A549 (cell line): ENCODE measurements at regions of chr17 and their contacts with region 1.

Region 1: DNA sequence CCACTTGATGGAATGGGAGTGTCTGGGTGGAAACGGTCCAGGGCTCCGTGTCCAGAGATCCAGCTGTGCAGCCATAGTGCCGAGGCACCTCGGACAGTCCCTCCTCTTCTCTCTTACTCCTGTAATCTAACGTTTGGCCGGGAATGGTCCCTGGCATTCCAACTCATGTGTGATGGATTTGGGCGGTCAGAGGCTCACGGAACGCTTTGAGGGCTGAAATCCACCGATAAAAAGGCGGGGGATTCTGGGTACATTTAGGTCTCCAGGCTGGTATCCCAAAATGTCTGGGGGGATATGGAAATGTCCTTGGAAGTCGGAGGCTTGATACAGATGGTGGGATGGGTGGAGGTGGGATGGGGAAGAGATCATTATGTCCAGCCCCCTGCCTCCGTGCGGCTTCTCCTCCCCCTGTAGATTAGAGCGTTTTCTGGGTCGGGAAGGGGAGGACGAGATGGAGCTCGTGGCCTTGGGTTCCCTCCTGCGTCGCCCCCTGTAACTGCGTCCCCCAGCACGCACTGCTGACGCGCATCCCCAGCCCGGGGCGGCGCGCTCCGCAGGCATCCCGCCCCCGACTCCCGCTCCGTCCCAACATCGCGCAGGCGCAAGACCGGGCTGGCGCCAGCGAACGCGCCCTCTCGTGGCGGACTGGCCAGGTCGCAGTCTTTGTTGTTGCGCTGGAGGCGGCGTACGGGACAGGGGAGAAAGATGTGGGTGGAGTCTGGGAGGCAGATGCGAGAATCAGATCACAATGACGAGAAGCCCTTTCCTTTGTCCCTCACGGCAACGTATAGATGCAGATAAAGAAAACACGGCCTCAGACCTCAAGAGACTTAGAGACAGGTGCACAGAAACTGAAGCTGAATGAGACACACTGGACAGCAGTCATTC is 4.5 kb upstream of the SGCA start:
- DNase-seq: peak; percentile 92 to 100
- ATAC-seq: peak; percentile 88 to 96
- H3K4me3 ChIP-seq: peak overlapping the region; percentile 74
- H3K27ac ChIP-seq: peak overlapping the region; percentile 80 to 86
- H3K4me1 ChIP-seq: peaks cover 9% of the 10 kb centered on the region; the same call in 2 of the 3 replicates
- CTCF ChIP-seq: peak; percentile 98
- EP300 ChIP-seq: no peak
- POLR2A ChIP-seq: peak; percentile 92
- RAD21 ChIP-seq: peak; percentile 72 to 80

Region 2: DNA sequence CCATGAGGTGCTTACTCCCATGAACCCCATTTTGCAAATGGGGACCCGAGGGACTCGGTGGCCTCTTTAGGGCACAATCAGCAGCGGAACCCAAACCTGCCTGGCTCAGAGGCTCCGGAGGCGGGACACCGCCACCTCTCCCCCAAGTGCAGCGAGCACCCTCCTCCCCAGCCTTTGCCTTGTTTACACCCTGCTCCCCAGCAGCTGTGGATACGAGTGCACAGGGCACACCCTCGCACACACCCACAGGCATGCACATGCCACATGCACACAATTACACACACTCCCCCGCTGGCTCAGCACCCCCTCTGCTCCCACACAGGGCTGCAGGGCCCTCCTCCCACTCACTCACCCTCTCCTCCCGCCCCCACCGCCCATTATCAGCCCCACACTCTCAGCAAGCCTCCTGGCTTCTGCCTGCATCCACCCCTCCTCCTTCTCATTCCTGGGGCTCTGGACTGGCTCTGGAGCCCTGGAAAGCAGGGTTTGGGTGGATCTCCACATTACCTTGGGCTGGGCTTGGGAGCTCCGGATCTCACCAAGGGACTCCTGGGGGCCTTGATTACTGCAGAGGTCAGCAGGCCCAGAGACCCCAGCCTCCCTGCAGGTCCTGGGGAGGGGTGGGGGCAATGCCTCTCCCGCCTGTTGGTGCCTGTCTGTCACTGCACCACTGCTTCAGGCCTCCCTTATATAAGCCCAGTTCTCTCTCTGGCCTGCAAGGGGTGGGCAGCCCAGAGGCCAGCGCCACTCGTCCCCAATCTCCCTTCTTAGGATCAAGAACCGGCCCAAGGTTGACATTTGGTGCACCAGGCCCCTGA is 59.7 kb before region 1 on chr17:
- CTCF ChIA-PET with region 1: interaction called, 1,356 read pairs
- POLR2A ChIA-PET with region 1: no interaction called
- DNase-seq: no peak
- ATAC-seq: peak; percentile 27 to 63
- H3K4me3 ChIP-seq: no peak overlapping the region
- H3K27ac ChIP-seq: peak overlapping the region in 1 of 2 experiments; percentile 68; a peak in 3 of 6 replicates
- H3K4me1 ChIP-seq: peaks cover 29% of the 10 kb centered on the region
- CTCF ChIP-seq: no peak
- EP300 ChIP-seq: no peak
- POLR2A ChIP-seq: no peak
- RAD21 ChIP-seq: no peak

Region 3: DNA sequence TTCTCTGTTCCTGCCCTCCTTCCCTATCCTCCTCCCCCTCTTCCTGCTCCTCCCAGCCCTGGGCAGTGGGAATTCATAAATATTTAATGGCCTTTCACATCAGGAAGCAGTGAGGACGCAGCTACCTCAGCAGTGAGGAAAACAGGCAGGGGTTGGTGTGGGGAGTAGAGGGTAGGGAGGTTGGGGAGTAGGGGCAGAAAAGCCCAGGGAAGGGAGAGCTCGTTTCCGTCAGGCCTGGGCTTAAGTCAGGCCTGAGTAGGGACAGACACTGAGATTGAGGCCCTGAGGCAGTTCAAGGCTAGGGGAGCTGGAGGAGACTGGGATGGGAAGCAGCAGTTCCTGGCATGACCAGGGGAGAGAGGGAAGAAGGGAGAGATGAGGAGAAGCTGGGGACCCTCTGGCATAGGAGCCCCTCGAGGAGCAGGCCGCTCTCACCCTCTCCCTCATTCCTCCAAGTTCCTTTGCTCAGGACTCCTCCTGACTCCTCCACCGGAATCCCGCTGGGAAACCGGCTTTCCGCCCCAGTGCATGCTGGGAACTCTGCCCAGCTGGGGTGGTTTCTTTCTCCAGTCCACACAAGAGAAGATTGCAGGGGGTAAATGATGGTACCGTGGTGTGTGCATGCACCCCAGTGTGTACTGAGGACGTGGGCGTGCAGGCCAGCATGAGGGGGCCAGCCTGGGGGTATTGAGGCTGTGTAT is 37.5 kb before region 1 on chr17:
- CTCF ChIA-PET with region 1: interaction called, 1,356 read pairs
- POLR2A ChIA-PET with region 1: no interaction called
- DNase-seq: no peak
- ATAC-seq: peak in 1 of 2 experiments; percentile 27; a peak in 3 of 6 replicates
- H3K4me3 ChIP-seq: no peak overlapping the region
- H3K27ac ChIP-seq: peak overlapping the region in 1 of 2 experiments; percentile 17; a peak in 1 of 6 replicates
- H3K4me1 ChIP-seq: peaks cover 10% of the 10 kb centered on the region; the same call in 1 of the 3 replicates
- CTCF ChIP-seq: no peak
- EP300 ChIP-seq: no peak
- POLR2A ChIP-seq: no peak
- RAD21 ChIP-seq: no peak

Region 4: DNA sequence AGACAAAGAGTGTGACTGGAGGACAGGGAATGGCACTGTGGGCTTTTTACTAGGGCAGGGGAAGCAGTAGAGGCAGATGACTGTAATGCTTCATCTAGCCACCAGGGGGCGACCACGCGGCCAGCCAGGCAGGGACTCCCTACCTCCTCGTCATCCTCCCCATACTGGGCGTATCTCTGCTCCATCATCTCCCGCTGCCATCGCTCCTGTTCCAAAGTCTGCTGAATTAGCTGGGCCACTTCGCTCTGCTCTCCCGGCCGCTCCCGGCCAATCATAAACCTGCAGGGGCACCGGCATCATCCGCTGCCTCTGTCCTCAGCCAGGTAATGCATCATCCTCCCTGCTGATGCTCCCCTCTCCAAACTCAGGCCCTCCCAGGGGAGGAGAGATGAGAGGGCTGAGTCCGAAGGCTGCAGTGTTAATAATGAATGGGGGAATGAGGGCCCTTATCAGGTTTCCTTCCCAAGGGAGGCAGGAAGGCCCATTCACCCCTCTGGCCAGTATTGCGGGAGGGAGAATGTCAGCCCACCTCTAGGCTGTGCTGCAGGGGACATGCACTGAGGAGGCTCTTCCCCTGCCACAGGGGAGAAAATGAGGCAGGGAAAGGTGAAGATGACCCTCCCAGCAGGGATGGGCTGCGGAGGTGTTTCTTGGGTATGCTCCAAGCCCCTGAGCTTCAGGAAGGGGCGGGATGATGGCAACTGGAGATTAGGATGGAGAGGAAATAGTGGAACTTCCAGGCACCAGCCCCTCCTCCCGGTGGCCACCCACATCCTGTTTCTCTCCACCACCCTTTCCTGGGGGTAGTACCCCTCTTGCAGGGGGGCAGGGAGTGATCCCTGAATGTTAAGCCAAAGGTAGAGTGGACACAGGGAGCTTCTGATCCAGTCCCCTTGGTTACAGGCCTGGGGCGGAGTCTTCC is 21.1 kb before region 1 on chr17:
- CTCF ChIA-PET with region 1: interaction called, 424 read pairs
- POLR2A ChIA-PET with region 1: no interaction called
- DNase-seq: peak; percentile 89 to 91
- ATAC-seq: peak; percentile 66 to 89
- H3K4me3 ChIP-seq: no peak overlapping the region
- H3K27ac ChIP-seq: no peak overlapping the region
- H3K4me1 ChIP-seq: peaks cover 18% of the 10 kb centered on the region
- CTCF ChIP-seq: peak; percentile 90
- EP300 ChIP-seq: no peak
- POLR2A ChIP-seq: no peak
- RAD21 ChIP-seq: peak; percentile 62 to 69; a peak in 4 of 5 replicates

Region 5: DNA sequence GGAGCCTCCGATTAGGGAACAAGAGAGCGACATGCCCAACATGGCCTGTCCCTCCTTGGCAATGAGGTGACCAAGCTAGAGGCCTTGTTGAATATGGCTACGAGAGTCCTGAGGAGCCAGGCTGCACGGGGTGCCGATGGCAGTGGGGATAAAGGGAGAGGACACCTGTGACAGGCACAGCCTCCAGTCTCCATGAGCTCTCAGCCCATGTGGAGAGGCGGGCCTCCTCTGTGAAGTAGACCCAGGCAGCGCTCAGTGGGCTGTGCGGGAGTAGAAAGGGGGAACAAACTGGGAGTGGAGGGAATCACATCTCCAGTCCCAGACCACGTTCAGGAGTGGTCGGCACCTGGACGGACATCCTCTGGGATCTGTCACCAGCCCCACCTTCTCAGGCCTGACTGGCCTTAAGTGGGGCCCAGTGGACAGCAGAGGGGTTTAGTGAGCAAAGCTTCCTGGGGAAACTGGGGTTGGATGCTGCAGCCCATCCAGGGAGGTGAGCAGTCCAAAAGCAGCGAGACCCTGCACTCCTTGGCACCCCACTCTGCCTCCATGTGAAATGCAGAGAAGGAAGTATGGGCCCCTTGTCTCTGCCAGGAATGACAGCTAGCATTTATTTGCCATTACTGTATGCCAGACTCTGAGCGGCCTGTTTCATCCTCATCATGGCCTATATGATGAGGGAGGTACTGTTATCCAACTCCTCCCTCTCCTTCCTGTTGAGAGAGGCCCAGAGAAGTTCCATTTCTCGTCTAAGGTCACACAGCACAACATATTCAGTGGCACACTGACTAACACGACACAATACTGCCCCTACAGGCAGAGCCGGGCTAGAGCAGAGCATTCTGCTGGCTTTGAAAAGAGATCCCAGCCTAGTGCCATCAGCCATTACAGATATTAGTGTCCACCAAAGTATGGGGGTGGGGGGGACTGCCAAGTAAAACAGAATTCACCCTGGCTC is 108.5 kb after region 1 on chr17:
- CTCF ChIA-PET with region 1: interaction called, 19 read pairs
- POLR2A ChIA-PET with region 1: no interaction called
- DNase-seq: peak; percentile 79 to 91
- ATAC-seq: peak; percentile 58 to 66
- H3K4me3 ChIP-seq: no peak overlapping the region
- H3K27ac ChIP-seq: peak overlapping the region in 1 of 2 experiments; percentile 36; a peak in 3 of 6 replicates
- H3K4me1 ChIP-seq: peaks cover 47% of the 10 kb centered on the region
- CTCF ChIP-seq: peak; percentile 93
- EP300 ChIP-seq: no peak
- POLR2A ChIP-seq: no peak
- RAD21 ChIP-seq: peak; percentile 79 to 90